ENCODE measurements at regions of chr12 and their contacts with region 1.

Region 1: DNA sequence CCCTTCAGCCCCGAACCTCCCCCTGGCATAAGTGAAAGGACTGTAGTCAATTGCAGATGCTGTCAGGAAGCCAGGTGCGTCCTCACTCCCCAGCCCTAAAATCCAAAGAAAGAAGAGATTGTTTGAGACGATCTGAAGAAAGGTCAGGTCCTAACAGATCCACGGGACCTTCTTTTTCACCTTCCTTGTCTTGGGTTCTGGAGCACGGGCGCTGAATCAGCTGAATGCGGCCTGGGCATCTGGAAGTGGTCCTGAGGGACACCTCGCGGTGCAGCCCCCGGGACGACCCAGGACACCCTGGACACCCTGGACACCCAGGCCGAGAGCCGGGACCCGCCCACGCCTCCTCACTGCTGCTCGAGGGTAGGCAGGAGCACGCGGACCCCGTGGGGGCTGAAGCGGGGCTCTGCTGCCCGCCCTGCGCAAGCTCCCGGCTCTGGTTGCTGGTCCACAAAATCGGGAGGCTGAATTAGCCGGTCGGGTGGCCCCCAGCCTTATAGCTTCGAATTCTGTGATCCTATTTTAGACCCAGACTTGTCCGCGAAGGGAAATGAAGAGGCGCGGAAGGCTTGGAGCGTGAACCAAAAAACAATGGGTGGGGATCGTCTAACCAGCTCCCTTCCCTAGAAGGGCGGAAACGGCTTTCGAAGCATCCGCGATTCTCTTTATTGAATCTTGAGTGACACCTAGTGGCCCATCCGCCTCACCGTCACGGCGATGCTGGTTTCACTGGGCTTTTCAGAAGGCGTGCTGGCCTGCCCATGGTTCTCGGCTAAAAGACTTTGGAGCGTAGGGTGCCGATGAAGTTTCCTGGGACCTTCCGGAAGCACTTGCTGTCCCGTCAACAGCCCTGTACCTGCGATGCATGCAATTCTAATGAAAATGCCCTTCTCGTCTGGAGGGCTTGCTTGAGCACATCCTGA is 46.4 kb upstream of the PLXNC1 start:
- DNase-seq: peak; percentile 96
- H3K4me3 Mint-ChIP-seq: peak overlapping the region; percentile 88
- H3K27ac Mint-ChIP-seq: peak overlapping the region; percentile 84
- H3K4me1 Mint-ChIP-seq: peaks cover 37% of the 10 kb centered on the region
- H3K27me3 Mint-ChIP-seq: peaks cover 12% of the 10 kb centered on the region

Region 2: DNA sequence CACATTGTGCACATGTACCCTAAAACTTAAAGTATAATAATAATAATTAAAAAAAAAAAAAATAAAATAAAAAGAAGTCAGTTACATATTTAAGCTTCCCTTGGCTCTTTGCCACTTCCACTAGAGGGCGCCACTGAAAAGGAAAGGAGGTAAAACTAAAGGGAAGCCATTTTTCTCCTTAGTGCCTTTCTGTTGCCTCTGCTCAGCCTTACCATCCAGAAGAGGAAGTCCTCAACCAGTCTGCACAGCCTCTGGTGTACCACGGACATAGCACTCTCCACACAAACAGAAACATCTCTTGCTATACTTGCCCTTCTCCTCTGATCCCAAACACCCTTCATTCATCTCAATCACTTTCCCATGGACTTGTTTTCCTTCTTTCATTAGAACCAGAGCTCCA is 1003.9 kb before region 1 on chr12:
- intact Hi-C with region 1: loop called (anchors 5 kb)
- DNase-seq: peak; percentile 90
- H3K4me3 Mint-ChIP-seq: no peak overlapping the region
- H3K27ac Mint-ChIP-seq: no peak overlapping the region
- H3K4me1 Mint-ChIP-seq: peaks cover 9% of the 10 kb centered on the region
- H3K27me3 Mint-ChIP-seq: no peaks in the 10 kb centered on the region

Region 3: GRCh38 chr12:93441617-93442410 is 660.2 kb before region 1 on chr12 and contains the start of gene UBE2N:
- intact Hi-C with region 1: loop called (anchors 2 kb)
- DNase-seq: peak; percentile 99
- H3K4me3 Mint-ChIP-seq: peak within 1 kb of the TSS; percentile 94
- H3K27ac Mint-ChIP-seq: peak within 1 kb of the TSS; percentile 97
- H3K4me1 Mint-ChIP-seq: peaks cover 43% of the 10 kb centered on the region
- H3K27me3 Mint-ChIP-seq: no peaks in the 10 kb centered on the region
- total RNA-seq, gene UBE2N: 225 and 243 TPM in 2 replicates

Region 4: DNA sequence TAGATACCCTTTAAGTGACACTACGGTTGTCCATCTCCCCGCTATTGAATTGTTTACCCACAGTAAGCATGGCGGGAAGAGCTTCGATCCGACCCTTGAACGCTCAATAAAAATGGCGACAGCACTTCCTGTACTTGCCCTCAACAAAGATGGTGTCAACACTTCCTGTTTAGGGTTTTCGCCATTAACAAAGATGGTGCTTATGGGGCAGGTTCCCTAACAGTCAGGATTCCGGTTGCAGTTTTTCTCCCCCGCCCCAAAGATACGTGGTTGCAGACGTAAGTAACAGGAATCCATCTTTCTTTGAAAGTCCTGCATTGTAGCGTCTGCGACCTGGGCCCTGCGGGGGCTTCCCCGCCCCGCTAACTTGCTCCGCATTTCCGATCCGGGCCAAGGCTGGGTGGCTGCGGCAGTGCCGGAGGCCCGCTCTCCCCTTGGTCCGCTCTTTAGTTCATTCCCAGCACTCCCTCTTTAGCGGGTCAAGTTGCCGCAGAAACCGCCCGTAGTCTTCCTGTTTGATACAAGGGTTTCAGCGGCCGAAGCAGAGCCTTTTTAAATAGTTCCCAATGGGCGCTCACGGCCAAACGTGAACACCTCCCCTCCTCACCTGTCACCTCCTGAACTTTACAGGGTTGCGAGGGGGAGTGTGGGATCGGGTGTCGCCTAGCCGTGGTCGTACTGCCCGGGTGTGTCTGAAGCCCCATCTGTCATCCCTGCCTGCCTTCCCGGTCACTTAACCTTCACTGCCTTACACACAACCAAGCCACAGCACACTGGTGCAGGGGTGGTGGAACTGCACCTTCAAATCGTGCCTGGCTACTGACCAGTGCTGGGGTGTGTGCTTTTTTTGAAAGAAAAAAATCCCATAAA is 424.6 kb before region 1 on chr12 and contains the start of gene CRADD:
- intact Hi-C with region 1: loop called (anchors 1 kb)
- DNase-seq: peak; percentile 96
- H3K4me3 Mint-ChIP-seq: peak within 1 kb of the TSS; percentile 96
- H3K27ac Mint-ChIP-seq: peak within 1 kb of the TSS; percentile 99
- H3K4me1 Mint-ChIP-seq: peaks cover 37% of the 10 kb centered on the region
- H3K27me3 Mint-ChIP-seq: peaks cover 4% of the 10 kb centered on the region
- total RNA-seq, gene CRADD: 8.1 and 12.6 TPM in 2 replicates

Region 5: GRCh38 chr12:93847517-93848474 is 254.2 kb before region 1 on chr12:
- intact Hi-C with region 1: loop called (anchors 5 kb)
- DNase-seq: peak; percentile 73
- H3K4me3 Mint-ChIP-seq: peak overlapping the region; percentile 43
- H3K27ac Mint-ChIP-seq: peak overlapping the region; percentile 62
- H3K4me1 Mint-ChIP-seq: peaks cover 48% of the 10 kb centered on the region
- H3K27me3 Mint-ChIP-seq: no peaks in the 10 kb centered on the region

Region 6: GRCh38 chr12:93979189-93979588 is 122.8 kb before region 1 on chr12:
- intact Hi-C with region 1: loop called (anchors 2 kb)
- DNase-seq: peak; percentile 80
- H3K4me3 Mint-ChIP-seq: no peak overlapping the region
- H3K27ac Mint-ChIP-seq: no peak overlapping the region
- H3K4me1 Mint-ChIP-seq: peaks cover 34% of the 10 kb centered on the region
- H3K27me3 Mint-ChIP-seq: peaks cover 6% of the 10 kb centered on the region